B cell (primary cell): ENCODE measurements at regions of chr11 and their contacts with region 1.

Region 1: DNA sequence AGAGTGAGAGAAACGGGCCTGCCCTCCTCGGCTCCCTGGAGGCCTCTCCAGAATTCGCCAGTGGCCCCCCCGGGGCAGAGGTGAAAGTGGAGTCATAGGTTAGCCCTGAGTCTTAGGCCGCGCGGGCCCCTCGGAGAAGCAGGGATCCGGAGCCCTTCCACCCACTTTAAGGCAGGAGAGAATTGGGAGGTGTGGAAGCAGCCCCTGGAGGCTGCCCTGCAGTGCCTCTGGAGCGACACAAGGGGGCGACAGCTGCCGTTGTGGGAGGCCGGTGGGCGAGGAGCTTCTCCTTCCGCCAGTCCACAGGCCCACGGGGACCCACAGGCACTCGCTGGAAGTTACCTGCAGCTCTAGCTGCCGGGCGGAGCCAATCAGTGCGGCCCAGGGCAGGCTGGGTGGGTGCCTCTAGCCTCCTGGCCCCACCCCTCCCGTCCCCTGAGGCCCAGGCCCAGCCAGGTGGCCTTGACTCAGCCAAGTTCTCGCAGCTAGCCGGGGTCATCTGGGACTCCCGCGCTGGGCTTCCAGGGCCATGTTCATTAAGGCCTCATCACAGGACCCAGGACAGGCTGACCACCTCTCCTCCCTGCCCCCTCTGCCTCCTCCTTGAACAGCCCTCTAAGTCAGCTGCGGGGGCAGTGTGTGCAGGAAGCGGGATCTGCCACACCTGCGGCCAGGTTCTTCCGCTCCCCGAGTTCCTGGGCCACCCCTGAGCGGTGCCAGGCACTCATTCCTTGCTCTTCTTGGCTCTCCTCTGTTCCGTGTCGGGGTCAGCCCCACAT is 5.0 kb downstream of the DGKZ start:
- DNase-seq: peak; percentile 43
- ATAC-seq: no peak
- H3K4me3 ChIP-seq: no peak overlapping the region
- H3K4me3 Mint-ChIP-seq: no peak overlapping the region
- H3K27ac ChIP-seq: no peak overlapping the region
- H3K27ac Mint-ChIP-seq: peak overlapping the region; percentile 37
- H3K4me1 ChIP-seq: peaks cover 14 to 27% of the 10 kb centered on the region in 2 donors
- H3K4me1 Mint-ChIP-seq: peaks cover 32% of the 10 kb centered on the region
- H3K27me3 ChIP-seq: no peaks in the 10 kb centered on the region
- H3K27me3 Mint-ChIP-seq: no peaks in the 10 kb centered on the region
- CTCF ChIP-seq: peak; percentile 56

Region 2: DNA sequence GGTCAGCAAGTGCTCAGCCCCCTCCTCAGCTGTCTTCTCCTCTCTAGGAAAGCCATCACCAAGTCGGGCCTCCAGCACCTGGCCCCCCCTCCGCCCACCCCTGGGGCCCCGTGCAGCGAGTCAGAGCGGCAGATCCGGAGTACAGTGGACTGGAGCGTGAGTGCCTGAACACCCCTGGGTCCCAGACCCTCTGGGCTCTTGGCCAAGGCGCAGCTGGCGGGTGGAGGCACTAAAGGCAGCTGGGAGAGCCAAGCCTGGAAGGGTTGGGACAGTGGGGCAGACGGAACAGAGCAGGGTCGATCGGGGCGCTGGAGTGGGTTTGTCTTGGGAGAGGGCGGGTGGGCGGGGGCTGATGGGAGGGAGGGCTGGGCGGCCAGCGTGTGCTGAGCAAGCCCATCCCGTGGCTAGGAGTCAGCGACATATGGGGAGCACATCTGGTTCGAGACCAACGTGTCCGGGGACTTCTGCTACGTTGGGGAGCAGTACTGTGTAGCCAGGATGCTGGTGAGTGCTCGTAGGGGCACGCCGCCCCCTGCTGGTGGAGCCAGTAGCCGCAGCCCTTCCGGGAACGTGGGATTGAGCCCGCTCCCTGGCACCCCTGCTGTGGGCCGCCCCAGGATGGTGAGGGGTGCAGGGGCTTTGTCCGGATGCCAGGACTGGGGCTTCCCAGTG is 15.1 kb after region 1 on chr11:
- CTCF ChIA-PET with region 1: interaction called, 18 read pairs
- POLR2A ChIA-PET with region 1: no interaction called
- intact Hi-C with region 1: loop called (anchors 1 kb)
- DNase-seq: peak; percentile 74
- ATAC-seq: peak; percentile 75
- H3K4me3 ChIP-seq: no peak overlapping the region
- H3K4me3 Mint-ChIP-seq: no peak overlapping the region
- H3K27ac ChIP-seq: no peak overlapping the region
- H3K27ac Mint-ChIP-seq: no peak overlapping the region
- H3K4me1 ChIP-seq: peaks cover 2 to 13% of the 10 kb centered on the region in 2 donors
- H3K4me1 Mint-ChIP-seq: peaks cover 13% of the 10 kb centered on the region
- H3K27me3 ChIP-seq: no peaks in the 10 kb centered on the region
- H3K27me3 Mint-ChIP-seq: no peaks in the 10 kb centered on the region
- CTCF ChIP-seq: peak; percentile 87